Right ventricle myocardium inferior (tissue), 1 donor: ENCODE measurements at regions of chr11 and their contacts with region 1.

Region 1: DNA sequence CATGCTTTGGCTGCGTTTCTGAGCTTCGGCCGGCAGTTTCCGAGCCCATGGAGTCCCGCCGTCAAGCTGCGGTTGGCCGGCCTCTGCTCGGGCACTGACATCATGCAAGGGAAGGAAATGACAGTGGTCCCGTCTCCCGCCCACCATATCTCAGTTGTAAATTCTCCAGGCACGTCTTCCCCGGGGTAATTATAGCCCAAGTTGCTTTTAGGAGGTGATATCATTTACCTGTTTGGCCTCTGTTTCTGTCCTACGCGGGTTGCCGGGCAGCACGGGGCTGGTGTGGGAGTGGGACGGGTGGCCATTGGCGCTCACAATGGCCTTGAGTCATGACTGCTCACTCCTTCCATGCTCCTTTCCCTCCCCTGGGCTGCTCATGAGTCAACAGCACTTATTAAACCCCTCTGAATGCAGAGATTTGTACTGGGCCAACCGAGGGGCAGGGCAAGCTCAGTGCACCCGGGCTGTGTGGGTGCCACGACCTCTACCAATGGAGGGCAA is 4.2 kb upstream of the ANO1 start:
- DNase-seq: no peak
- ATAC-seq: no peak

Region 2: GRCh38 chr11:69918938-69919650 is 154.8 kb before region 1 on chr11:
- intact Hi-C with region 1: loop called (anchors 2 kb)
- DNase-seq: peak; percentile 87
- ATAC-seq: peak; percentile 80

Region 3: DNA sequence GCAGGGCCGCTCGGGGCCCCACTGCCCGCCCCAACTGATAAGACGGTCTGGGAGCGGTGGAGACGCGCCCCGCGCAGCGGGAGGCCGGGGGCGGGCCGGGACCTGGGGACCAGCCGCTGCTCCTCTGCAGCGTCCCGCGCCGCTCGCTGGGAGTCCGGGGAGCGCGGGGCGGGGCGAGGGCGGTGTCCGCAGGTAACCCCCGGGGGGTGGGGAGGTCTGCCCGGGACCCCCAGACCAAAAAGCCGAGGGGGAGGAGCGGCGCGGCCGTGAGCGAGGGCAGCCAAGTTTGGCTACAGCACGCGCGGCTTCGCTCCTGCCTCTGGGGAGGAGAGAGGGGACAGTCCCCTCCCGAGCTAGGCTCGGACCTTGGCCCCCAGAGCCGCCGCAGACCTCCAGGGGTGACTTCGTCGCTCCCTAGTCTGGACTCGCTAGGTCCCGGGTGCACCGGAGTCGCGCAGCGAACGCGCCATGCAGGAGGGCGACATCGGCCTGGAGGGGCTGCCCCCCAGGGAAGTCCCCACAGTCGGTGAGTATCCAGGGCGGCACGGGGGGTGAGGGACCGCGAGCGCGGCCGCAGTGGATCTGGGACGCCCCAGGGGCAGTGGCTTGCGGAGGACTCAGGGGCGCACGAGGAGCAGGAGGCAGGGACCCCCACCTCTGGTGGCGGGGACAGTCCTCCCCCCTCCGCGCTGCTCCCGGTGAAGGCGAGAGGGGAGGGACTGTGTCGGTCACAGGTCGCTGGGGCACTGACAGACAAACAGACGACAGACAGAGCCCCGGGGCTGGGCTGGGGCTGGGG is 88.1 kb before region 1 on chr11:
- intact Hi-C with region 1: loop called (anchors 10 kb)
- DNase-seq: no peak
- ATAC-seq: peak; percentile 26

Region 4: DNA sequence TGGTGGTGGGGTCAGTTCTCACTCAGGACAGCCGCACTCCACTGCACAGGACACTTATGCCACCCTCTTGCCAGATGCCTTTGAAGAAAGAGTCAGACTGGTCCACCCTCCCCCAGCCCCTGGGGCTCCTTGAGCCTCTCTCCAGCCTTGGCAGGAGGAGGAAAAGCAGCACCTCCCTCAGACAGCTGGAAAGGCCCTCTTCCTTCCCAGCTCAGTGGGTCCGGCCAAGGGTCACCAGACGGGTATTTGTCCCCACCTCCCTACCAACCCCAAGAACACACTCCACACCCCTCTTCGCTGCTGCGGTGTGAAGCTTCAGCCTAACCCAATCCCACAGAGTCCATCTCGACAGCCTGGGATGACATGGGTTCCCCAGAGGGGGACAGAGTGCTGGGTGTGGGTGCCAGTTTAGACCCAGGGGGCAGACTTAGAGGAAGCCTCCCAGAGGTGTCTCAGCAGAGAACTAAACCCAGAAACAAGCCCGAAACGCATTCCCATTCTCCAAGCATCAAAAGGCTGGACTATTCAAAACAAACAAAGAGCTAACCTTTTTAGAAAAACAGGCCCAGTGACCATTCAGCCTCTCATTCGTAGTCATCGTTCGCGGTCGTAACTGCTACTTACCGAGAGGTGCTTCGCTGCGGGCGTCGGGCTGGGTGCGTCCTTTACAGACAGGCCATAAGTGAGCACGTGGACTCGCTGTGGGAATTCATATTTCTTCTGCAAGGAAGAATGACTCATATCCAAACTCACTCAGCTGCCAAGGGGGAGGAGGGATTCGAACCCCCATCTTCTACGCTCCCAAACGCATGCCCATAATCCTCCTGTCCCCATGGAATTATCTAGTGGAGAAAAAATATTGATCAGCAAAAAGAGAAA is 53.3 kb before region 1 on chr11:
- intact Hi-C with region 1: loop called (anchors 5 kb)
- DNase-seq: no peak
- ATAC-seq: peak; percentile 60